HepG2 (cell line): ENCODE measurements at regions of chrX and their contacts with region 1.

Region 1: DNA sequence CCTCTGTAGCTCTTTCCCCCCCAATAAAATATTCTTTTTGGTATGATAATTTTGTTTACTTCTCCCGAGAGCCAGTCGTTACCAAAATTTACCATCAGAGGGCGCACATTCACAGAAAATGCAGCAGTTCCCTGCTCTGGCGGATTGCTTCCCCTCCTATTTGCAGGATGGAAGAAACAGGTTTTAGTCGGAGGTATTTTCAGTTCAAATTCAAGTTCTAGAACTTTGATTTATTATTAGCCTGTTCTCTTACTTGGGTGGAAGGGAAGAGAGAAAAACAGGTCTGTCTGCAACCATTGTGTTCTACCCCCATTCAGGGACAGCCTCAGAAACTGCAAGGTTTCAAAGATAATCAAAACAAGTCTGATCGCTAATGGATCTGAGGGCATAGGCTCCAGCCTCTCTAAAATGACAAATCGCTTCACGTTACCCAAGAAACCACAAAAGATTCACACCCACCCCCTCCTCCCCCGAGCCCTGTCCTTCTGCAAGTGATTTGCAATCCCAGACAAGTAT is 263.8 kb upstream of the RPS6KA3 start:
- DNase-seq: peak; percentile 30
- ATAC-seq: peak; percentile 69
- H3K4me3 ChIP-seq: peak overlapping the region; percentile 14 to 43 (median 29); a peak in 5 of 6 replicates
- H3K27ac ChIP-seq: no peak overlapping the region
- H3K4me1 ChIP-seq: peaks cover 50% of the 10 kb centered on the region
- H3K27me3 ChIP-seq: no peaks in the 10 kb centered on the region
- CTCF ChIP-seq: peak; percentile 66
- EP300 ChIP-seq: no peak
- POLR2A ChIP-seq: no peak
- RAD21 ChIP-seq: peak; percentile 50; the same call in 1 of the 2 replicates

Region 2: DNA sequence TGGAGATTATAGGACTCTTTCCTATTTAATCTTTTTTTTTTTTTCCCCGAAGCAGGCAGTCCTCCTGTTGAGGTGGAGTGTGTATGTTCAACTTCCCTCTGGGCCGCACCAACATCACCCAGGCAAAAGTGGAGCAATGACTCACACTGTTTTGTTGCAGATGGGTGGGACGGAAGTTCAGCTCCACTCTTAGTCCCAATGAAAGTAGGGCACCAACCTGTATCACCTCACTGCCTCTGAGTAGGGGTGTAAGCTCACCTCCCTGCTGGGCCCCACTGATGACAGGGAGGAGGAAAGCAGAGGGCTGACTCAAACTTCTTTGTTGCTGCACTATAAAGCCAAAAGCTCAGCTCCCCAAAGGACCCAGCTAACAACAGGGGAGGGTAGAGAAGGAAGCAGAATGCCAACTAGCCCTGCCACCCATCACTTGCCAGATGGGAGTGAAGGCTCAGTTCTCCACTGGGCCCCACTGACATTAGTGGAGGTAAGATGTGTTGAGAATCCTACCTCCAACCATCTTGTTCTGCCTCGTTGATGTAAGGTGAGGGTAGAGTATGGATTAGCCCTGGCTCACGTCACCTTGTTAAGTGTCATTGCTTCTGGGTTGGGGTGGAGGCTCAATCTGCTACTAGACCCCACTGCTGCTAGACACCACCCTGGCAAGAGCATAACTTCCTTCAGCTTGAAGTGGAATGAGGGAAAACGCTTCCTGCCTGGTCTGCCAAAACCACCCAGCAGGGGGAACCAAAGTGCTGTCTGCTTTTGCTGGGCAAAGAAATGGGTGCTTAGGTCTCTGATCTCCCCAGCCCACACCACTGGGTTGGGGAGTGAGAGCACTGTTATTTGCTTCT is 277.9 kb before region 1 on chrX:
- CTCF ChIA-PET with region 1: no interaction called
- POLR2A ChIA-PET with region 1: no interaction called
- in situ Hi-C with region 1: no loop called
- intact Hi-C with region 1: loop called (anchors 5 kb)
- DNase-seq: peak; percentile 35
- ATAC-seq: peak; percentile 60
- H3K4me3 ChIP-seq: no peak overlapping the region
- H3K27ac ChIP-seq: peak overlapping the region; percentile 35
- H3K4me1 ChIP-seq: peaks cover 91% of the 10 kb centered on the region
- H3K27me3 ChIP-seq: no peaks in the 10 kb centered on the region
- CTCF ChIP-seq: peak; percentile 59
- EP300 ChIP-seq: no peak
- POLR2A ChIP-seq: peak in 1 of 2 experiments; percentile 7; a peak in 2 of 4 replicates
- RAD21 ChIP-seq: peak; percentile 51; the same call in 1 of the 2 replicates

Region 3: DNA sequence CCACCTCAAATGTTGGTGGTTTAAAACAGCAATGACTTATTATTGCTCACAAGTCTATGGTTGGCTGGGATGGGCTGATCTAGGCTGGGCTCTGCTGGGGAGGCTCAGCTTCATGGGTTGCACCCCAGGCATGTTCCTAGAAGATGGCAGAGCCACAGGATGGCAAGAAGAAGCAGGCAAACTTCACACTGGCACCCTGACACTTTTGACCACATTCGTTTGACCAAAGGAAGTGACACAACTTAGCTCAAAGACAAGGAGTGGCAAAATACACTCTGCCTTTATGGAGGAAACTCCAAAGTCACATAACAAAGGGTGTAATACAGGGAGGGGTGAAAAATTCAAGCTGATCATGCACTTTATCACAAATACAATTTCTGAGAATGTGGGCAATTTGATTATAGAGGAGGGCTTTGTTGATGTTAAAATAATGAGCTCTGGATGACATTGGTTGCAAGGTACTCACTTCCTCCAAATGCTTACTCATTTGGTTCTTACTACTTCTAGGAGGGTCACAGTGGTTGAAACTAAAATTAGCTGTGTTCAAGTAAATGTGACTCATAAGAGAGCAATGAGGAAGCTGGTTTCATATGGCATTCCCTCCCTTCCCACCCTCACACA is 14.5 kb before region 1 on chrX:
- CTCF ChIA-PET with region 1: no interaction called
- POLR2A ChIA-PET with region 1: no interaction called
- in situ Hi-C with region 1: no loop called
- intact Hi-C with region 1: no loop called
- DNase-seq: peak; percentile 23
- ATAC-seq: no peak
- H3K4me3 ChIP-seq: no peak overlapping the region
- H3K27ac ChIP-seq: no peak overlapping the region
- H3K4me1 ChIP-seq: peaks cover 10% of the 10 kb centered on the region; the same call in 1 of the 2 replicates
- H3K27me3 ChIP-seq: no peaks in the 10 kb centered on the region
- CTCF ChIP-seq: no peak
- EP300 ChIP-seq: no peak
- POLR2A ChIP-seq: no peak
- RAD21 ChIP-seq: no peak

Region 4: GRCh38 chrX:20742106-20742505 is 211.6 kb after region 1 on chrX:
- CTCF ChIA-PET with region 1: no interaction called
- POLR2A ChIA-PET with region 1: no interaction called
- in situ Hi-C with region 1: loop called (anchors 25 kb)
- intact Hi-C with region 1: loop called (anchors 2 kb)
- DNase-seq: no peak
- ATAC-seq: no peak
- H3K4me3 ChIP-seq: no peak overlapping the region
- H3K27ac ChIP-seq: no peak overlapping the region
- H3K4me1 ChIP-seq: no peaks in the 10 kb centered on the region
- H3K27me3 ChIP-seq: no peaks in the 10 kb centered on the region
- CTCF ChIP-seq: no peak
- EP300 ChIP-seq: no peak
- POLR2A ChIP-seq: no peak
- RAD21 ChIP-seq: no peak

Region 5: GRCh38 chrX:21374163-21374993 is 843.9 kb after region 1 on chrX and contains the start of gene CNKSR2:
- CTCF ChIA-PET with region 1: no interaction called
- POLR2A ChIA-PET with region 1: no interaction called
- in situ Hi-C with region 1: loop called (anchors 25 kb)
- intact Hi-C with region 1: no loop called
- DNase-seq: no peak
- ATAC-seq: peak; percentile 69
- H3K4me3 ChIP-seq: peak within 1 kb of the TSS in 1 of 3 experiments; percentile 16; a peak in 1 of 6 replicates
- H3K27ac ChIP-seq: no peak within 1 kb of the TSS
- H3K4me1 ChIP-seq: no peaks in the 10 kb centered on the region
- H3K27me3 ChIP-seq: no peaks in the 10 kb centered on the region; a peak in 1 of 5 replicates
- CTCF ChIP-seq: no peak
- EP300 ChIP-seq: no peak
- POLR2A ChIP-seq: no peak
- RAD21 ChIP-seq: no peak
- total RNA-seq, gene CNKSR2: not detected in 2 replicates

Region 6: DNA sequence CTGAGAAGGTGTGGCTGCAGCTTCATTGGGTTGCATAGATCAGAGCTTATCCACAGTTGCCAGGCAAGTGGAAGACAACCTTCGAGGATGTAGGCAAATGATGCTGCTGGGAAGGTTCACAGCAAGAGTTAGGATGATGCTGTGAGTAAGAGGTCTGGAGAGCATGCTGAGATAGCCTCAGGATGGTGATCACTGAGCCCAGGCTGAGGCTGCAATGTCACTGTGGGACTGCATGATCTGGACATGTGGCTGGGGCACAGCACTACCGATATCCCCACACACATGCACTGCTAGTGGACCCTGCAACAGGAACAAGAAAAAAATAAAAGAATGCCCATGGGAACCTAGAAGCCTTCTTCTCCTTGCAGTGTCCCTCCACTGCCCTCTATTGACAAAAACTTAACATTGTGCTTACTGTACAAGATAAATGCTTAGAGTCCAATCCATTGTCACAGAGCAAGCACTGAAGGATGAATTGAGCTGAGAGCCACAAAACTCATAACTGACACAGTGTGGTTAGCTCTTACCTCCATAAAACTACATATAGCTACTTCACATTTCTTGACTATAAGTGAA is 949.3 kb after region 1 on chrX:
- CTCF ChIA-PET with region 1: no interaction called
- POLR2A ChIA-PET with region 1: no interaction called
- in situ Hi-C with region 1: loop called (anchors 25 kb)
- intact Hi-C with region 1: loop called (anchors 5 kb)
- DNase-seq: peak; percentile 48
- ATAC-seq: peak; percentile 89
- H3K4me3 ChIP-seq: no peak overlapping the region
- H3K27ac ChIP-seq: no peak overlapping the region
- H3K4me1 ChIP-seq: no peaks in the 10 kb centered on the region
- H3K27me3 ChIP-seq: no peaks in the 10 kb centered on the region
- CTCF ChIP-seq: peak; percentile 66
- EP300 ChIP-seq: no peak
- POLR2A ChIP-seq: no peak
- RAD21 ChIP-seq: no peak

Region 7: GRCh38 chrX:21725496-21725895 is 1195.0 kb after region 1 on chrX:
- CTCF ChIA-PET with region 1: no interaction called
- POLR2A ChIA-PET with region 1: no interaction called
- in situ Hi-C with region 1: loop called (anchors 25 kb)
- intact Hi-C with region 1: loop called (anchors 10 kb)
- DNase-seq: peak; percentile 27
- ATAC-seq: peak; percentile 56; the same call in 2 of the 3 replicates
- H3K4me3 ChIP-seq: no peak overlapping the region
- H3K27ac ChIP-seq: no peak overlapping the region
- H3K4me1 ChIP-seq: peaks cover 37% of the 10 kb centered on the region
- H3K27me3 ChIP-seq: no peaks in the 10 kb centered on the region
- CTCF ChIP-seq: peak; percentile 65
- EP300 ChIP-seq: no peak
- POLR2A ChIP-seq: no peak
- RAD21 ChIP-seq: no peak

Region 8: DNA sequence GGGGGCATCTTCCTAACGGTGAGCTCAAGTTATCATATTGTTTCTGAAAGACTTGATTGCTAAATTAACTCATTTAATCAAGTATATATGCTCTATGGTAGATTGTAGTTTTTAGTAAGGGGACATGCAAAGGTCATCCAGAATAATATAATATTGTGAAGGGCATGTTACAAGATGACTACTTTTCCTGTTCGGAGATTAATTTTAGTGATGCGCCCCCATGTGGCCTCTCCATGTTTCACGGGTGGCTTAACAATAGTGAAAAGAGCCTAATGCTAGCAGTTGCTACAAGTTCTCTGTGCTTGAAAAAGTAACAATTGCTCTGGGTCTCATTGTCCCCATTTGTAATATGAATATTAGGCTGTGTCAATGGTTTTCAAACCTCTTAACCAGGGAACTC is 1215.3 kb after region 1 on chrX:
- CTCF ChIA-PET with region 1: no interaction called
- POLR2A ChIA-PET with region 1: no interaction called
- in situ Hi-C with region 1: loop called (anchors 25 kb)
- intact Hi-C with region 1: no loop called
- DNase-seq: no peak
- ATAC-seq: peak; percentile 38; the same call in 2 of the 3 replicates
- H3K4me3 ChIP-seq: no peak overlapping the region
- H3K27ac ChIP-seq: no peak overlapping the region
- H3K4me1 ChIP-seq: peaks cover 26% of the 10 kb centered on the region
- H3K27me3 ChIP-seq: no peaks in the 10 kb centered on the region
- CTCF ChIP-seq: peak; percentile 54
- EP300 ChIP-seq: no peak
- POLR2A ChIP-seq: no peak
- RAD21 ChIP-seq: no peak